A673 (cell line): ENCODE measurements at regions of chr3 and their contacts with region 1.

Region 1: DNA sequence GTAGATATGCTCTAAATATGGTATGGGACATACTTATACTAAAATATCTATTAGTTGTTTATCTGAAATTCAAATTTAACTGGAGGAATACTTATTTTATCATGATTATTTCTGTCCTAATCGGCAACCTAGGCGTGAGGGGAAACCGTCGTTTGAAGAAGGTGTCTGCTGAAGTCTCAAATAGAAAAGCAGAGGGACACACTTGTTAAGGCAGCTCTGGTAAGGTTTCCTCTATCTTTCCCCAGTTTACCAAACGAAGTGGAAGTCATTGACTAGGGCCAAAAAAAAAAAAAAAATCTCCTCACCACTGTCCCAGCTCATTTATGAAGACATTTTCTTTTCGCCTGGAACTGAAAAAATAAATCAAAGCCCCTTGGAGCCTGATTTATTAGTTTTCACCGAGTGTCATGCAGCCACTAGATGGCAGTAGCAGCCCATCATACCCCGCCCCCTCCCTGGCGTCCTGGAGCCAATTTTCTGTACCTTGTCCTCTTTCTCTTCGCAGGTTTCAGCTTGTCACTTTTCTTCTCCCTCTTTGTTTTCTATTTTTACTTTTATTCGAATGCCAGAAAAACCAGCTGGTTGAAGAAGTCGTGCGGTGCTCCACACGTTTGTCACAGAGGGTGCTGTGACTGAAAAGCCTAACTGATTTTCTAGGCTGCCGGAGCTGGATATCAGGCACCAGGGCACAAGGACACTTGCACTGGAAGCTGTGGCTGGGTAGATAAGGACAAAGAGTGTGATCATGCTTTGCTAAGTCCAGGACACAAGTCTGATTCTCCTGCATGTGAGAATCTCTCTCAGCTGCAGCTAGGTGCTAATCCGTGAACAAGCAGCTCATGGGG is 238.7 kb downstream of the ZPLD1 start:
- DNase-seq: peak; percentile 89
- H3K4me3 ChIP-seq: peak overlapping the region; percentile 19
- H3K27ac ChIP-seq: peak overlapping the region; percentile 51
- H3K4me1 ChIP-seq: peaks cover 43% of the 10 kb centered on the region
- H3K27me3 ChIP-seq: no peaks in the 10 kb centered on the region
- CTCF ChIP-seq: peak; percentile 91

Region 2: GRCh38 chr3:102415553-102415952 is 257.9 kb before region 1 on chr3:
- CTCF ChIA-PET with region 1: no interaction called
- POLR2A ChIA-PET with region 1: no interaction called
- intact Hi-C with region 1: no loop called
- DNase-seq: no peak
- H3K4me3 ChIP-seq: no peak overlapping the region
- H3K27ac ChIP-seq: no peak overlapping the region
- H3K4me1 ChIP-seq: no peaks in the 10 kb centered on the region
- H3K27me3 ChIP-seq: no peaks in the 10 kb centered on the region
- CTCF ChIP-seq: no peak

Region 3: DNA sequence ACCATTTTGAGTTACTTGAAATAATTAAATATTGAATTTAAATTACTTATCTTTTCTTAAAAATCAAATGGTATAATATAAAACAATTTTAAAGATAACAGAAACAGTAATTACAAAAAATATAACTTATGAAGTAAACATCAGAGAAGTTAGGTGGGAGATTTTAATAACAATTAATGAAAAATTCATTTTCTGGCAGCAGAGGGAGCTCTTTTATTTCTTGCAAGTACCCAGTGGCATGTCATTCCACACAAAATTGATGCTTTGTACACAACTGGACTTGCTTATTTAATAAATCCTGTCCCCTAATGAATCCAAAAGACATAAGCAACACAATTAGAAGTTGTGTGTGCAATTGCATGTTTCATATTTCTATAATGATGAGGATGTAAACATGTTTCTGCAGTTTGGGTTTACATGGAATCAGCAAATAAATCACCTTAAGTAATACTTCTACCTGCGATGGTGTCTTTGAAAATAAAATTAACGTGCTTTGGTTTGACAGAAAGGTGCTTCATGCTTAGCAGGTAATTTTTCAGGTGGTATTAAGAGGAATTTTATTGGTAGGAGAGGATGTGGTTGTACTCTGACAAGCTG is 622.6 kb after region 1 on chr3:
- CTCF ChIA-PET with region 1: no interaction called
- POLR2A ChIA-PET with region 1: no interaction called
- intact Hi-C with region 1: loop called (anchors 5 kb)
- DNase-seq: peak; percentile 79
- H3K4me3 ChIP-seq: no peak overlapping the region
- H3K27ac ChIP-seq: no peak overlapping the region
- H3K4me1 ChIP-seq: peaks cover 45% of the 10 kb centered on the region
- H3K27me3 ChIP-seq: no peaks in the 10 kb centered on the region
- CTCF ChIP-seq: peak; percentile 67